Dendritic cell treated with granulocyte-macrophage colony-stimulating factor and Interleukin-4, amounts not matched to agents 40 ng/mL and 50 ng/mL, for 4 days (primary cell): ENCODE measurements at regions of chr3 and their contacts with region 1.

Region 1: DNA sequence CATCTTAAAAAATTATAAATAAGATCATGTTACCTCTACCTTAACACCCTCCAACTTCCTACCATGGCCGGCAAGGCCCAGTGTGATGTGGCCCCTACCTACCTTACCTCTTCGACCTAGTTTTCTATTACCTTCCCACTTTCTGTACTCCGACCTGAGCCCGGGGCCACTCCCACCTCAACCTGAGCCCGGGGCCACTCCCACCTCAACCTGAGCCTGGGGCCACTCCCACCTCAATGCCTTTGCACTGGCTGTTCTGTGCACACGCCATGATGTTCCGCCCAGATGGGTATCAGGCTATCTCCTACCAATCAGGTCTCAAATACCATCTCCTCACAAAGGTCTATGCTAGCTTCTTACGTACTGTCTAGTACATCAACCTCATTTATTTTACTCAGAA is 66.8 kb upstream of the XXYLT1 start:
- H3K4me3 Mint-ChIP-seq: no peak overlapping the region
- H3K27ac Mint-ChIP-seq: no peak overlapping the region
- H3K4me1 Mint-ChIP-seq: no peaks in the 10 kb centered on the region
- H3K27me3 Mint-ChIP-seq: no peaks in the 10 kb centered on the region

Region 2: DNA sequence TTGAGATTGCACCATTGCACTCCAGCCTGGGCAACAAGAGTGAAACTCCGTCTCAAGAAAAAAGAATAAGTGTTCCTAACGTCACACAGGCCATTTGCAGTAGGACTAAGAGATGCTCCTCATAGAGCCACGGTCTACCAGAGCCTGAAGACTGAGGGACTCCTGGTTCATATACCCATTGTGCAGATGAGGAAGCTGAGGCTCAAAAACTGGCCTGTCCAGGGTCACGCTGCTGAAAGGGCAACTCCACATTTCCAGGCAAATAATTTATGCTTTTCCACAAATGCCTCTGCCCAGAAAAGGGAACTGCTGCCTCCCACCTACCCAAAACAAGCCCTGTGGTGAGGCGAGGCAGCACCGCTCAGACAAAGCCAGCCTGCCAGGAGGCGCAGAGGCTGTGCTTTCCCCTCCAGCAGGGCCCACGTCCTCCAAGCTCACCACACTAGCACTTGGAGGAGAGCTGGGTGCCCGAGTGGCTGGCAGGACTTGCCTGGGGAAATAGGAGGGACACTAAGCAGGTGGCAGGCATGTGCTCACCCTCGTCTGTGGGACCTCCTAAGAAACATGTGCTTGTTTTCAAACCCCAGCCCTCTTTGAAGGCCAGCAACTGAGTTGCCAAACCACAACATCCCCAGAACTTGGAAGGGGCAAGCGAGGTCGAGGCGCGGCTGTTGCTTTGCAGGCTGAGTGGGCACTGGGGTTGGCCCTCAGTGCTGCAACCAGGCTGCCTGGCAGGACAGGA is 262.4 kb before region 1 on chr3:
- intact Hi-C with region 1: no loop called
- H3K4me3 Mint-ChIP-seq: no peak overlapping the region
- H3K27ac Mint-ChIP-seq: no peak overlapping the region
- H3K4me1 Mint-ChIP-seq: peaks cover 44% of the 10 kb centered on the region
- H3K27me3 Mint-ChIP-seq: no peaks in the 10 kb centered on the region

Region 3: DNA sequence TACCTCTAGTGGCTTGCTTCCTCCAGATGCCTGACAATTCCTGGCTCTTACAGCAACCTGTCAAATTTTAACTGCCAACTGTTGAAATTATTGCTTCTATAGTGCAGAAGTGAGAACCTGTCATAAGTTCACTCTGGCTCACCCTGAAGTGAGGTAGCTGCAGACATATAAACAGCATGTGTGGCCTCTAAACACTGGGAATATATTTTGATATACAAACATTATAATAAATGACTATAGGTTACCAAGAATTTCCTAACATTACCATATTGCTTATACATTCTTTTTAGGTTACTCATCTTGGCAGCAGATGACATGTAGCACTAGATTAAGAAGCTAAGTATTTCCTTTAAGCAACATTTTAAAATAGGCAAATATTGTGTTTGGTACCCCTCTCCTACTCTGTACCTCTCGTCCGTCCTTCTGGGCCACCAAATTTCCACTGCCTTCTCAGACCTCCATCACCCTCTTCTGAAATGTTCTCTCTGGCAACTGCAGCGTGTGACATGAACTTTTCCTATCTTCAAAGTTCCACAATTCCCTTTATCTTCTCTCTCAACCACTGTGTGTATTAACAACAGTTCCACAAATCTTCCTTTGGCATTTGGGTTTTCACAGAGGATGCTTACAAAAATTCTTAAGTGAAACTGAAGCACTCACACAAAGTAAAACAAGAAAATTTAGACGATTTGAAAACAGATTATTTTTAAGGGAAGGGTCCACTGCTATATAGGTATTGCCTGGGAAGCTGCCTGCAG is 51.5 kb before region 1 on chr3:
- intact Hi-C with region 1: loop called (anchors 10 kb)
- H3K4me3 Mint-ChIP-seq: no peak overlapping the region
- H3K27ac Mint-ChIP-seq: no peak overlapping the region
- H3K4me1 Mint-ChIP-seq: no peaks in the 10 kb centered on the region
- H3K27me3 Mint-ChIP-seq: no peaks in the 10 kb centered on the region

Region 4: GRCh38 chr3:195307711-195308110 is 30.0 kb before region 1 on chr3:
- intact Hi-C with region 1: loop called (anchors 5 kb)
- H3K4me3 Mint-ChIP-seq: no peak overlapping the region
- H3K27ac Mint-ChIP-seq: no peak overlapping the region
- H3K4me1 Mint-ChIP-seq: no peaks in the 10 kb centered on the region
- H3K27me3 Mint-ChIP-seq: no peaks in the 10 kb centered on the region